ENCODE measurements at regions of chr14 and their contacts with region 1.

Region 1: DNA sequence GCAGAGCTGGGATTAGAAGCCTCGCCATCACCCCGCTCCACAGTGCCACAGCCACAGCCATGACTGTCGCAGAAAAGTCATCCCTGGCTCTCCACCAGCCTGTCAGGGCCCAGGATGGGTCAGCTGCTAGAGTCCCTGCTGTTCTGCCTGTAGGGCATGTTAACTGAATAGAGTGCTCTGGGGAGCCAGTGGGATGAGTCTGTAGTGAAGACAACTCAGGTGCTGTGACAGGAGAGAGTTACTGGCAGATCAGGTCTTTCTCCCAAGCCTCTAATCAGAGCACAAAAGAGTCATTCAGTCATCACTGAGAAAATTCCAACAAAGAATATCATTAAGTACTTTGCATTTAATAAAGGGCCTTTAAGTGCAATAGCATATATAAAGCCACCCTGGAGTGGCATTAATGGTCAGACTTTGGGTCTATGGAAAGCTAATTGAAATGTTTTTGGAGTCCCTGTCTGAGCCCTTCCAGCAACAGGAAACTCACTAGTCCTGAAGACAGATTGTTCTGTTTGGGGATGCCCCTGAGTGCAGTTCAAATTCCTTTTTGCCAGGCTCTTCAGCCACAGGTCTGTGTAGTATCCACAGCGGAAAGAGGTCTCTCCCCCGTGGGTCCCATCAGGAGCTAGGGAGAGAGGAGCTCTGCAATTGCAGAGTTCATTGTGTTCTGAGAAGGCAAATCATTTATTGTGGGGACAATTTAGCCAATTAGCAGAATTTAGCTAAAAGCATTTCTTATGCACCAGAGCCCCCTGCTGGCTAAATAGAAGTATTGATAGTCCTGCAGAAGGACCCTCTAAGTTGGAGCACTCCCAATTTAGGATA is 45.2 kb upstream of the C14orf132 start:
- DNase-seq: peak; percentile 47
- H3K4me3 ChIP-seq: peak overlapping the region in 1 of 2 experiments; percentile 36; a peak in 1 of 4 replicates
- H3K27ac ChIP-seq: no peak overlapping the region
- H3K4me1 ChIP-seq: no peaks in the 10 kb centered on the region
- H3K27me3 ChIP-seq: no peaks in the 10 kb centered on the region
- CTCF ChIP-seq: peak; percentile 93
- EP300 ChIP-seq: no peak
- RAD21 ChIP-seq: peak; percentile 95

Region 2: GRCh38 chr14:95561001-95561412 is 433.0 kb before region 1 on chr14:
- CTCF ChIA-PET with region 1: interaction called, 295 read pairs
- POLR2A ChIA-PET with region 1: no interaction called
- DNase-seq: peak; percentile 87
- H3K4me3 ChIP-seq: peak overlapping the region in 1 of 2 experiments; percentile 40; a peak in 1 of 4 replicates
- H3K27ac ChIP-seq: no peak overlapping the region
- H3K4me1 ChIP-seq: no peaks in the 10 kb centered on the region; a peak in 1 of 4 replicates
- H3K27me3 ChIP-seq: no peaks in the 10 kb centered on the region
- CTCF ChIP-seq: peak; percentile 98
- EP300 ChIP-seq: no peak
- RAD21 ChIP-seq: peak; percentile 97

Region 3: GRCh38 chr14:95609387-95609990 is 384.5 kb before region 1 on chr14:
- CTCF ChIA-PET with region 1: interaction called, 69 read pairs
- POLR2A ChIA-PET with region 1: no interaction called
- DNase-seq: peak; percentile 63
- H3K4me3 ChIP-seq: peak overlapping the region in 1 of 2 experiments; percentile 26; a peak in 1 of 4 replicates
- H3K27ac ChIP-seq: no peak overlapping the region
- H3K4me1 ChIP-seq: no peaks in the 10 kb centered on the region
- H3K27me3 ChIP-seq: no peaks in the 10 kb centered on the region; the same call in 1 of the 2 replicates
- CTCF ChIP-seq: peak; percentile 54
- EP300 ChIP-seq: no peak
- RAD21 ChIP-seq: peak; percentile 79

Region 4: GRCh38 chr14:95698287-95698686 is 295.7 kb before region 1 on chr14:
- CTCF ChIA-PET with region 1: no interaction called
- POLR2A ChIA-PET with region 1: no interaction called
- DNase-seq: no peak
- H3K4me3 ChIP-seq: no peak overlapping the region
- H3K27ac ChIP-seq: no peak overlapping the region
- H3K4me1 ChIP-seq: no peaks in the 10 kb centered on the region; a peak in 1 of 4 replicates
- H3K27me3 ChIP-seq: no peaks in the 10 kb centered on the region
- CTCF ChIP-seq: no peak
- EP300 ChIP-seq: no peak
- RAD21 ChIP-seq: no peak

Region 5: GRCh38 chr14:95979339-95980042 is 14.5 kb before region 1 on chr14:
- CTCF ChIA-PET with region 1: interaction called, 39 read pairs
- POLR2A ChIA-PET with region 1: no interaction called
- DNase-seq: peak; percentile 44
- H3K4me3 ChIP-seq: no peak overlapping the region
- H3K27ac ChIP-seq: no peak overlapping the region
- H3K4me1 ChIP-seq: no peaks in the 10 kb centered on the region
- H3K27me3 ChIP-seq: no peaks in the 10 kb centered on the region
- CTCF ChIP-seq: peak; percentile 39
- EP300 ChIP-seq: no peak
- RAD21 ChIP-seq: peak; percentile 54

Region 6: DNA sequence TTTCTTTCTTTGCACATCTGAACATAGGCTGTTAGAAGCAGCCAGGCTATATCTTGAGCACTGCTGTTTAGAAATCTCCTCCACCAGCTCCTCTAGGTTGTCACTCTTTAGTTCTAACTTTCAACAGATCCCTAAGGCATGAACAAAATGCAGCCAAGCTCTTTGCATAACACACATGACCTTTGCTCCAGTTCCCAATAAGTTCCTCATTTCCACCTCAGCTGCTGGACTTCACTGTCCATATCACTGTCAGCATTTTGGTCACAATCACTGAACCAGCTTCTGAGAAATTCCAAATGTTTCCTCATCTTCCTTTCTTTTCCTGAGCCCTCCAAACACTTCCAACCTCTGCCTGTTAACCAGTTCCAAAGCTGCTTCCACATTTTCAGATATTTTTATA is 17.6 kb after region 1 on chr14:
- CTCF ChIA-PET with region 1: interaction called, 13 read pairs
- POLR2A ChIA-PET with region 1: no interaction called
- DNase-seq: no peak
- H3K4me3 ChIP-seq: no peak overlapping the region
- H3K27ac ChIP-seq: no peak overlapping the region
- H3K4me1 ChIP-seq: no peaks in the 10 kb centered on the region
- H3K27me3 ChIP-seq: peaks cover 3% of the 10 kb centered on the region; the same call in 1 of the 2 replicates
- CTCF ChIP-seq: no peak
- EP300 ChIP-seq: no peak
- RAD21 ChIP-seq: no peak

Region 7: DNA sequence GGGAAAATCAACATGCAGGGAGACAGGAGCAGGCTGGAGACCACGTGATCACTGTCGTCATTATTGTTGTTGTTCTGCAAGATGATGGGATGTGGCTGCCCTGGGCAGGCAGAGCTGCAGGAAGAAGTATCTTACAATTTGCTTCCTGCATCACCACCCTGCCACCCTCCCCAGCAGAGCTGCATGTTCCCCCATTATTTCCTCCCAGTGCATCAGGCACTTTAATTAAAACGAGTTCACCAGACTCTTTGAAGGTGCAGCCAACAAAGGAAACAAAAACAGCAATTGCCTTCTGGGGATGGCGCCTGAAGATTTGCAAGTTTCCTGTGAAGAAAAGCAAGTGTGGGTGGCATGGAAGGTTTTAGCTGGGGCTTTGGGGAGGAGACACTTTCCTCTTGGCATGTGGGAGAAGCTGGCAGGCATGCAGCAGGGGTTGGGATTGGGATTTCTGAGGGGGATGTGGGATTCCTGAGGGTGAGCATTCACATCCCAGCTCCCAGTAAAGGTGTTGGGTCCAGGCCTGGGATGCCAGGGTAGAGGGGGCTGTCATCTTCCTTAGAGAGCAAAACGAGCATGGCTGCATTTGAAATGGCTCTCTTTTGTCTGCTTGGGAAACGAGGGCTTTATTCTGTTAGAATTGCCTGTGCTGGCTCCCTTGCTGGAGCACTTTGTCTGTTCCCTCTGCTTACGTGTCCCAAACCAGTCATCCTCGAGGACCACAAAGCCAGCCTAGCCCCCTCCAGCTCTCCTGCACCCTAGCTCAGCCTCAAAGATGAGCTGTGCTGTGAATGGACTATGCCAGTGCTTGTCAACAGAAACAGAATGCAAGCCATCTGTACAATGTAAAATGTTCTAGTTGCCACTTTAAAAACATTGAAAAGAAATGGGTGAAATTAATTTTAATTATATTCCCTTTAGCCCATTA is 33.7 kb after region 1 on chr14:
- CTCF ChIA-PET with region 1: interaction called, 10 read pairs
- POLR2A ChIA-PET with region 1: no interaction called
- DNase-seq: no peak
- H3K4me3 ChIP-seq: no peak overlapping the region
- H3K27ac ChIP-seq: no peak overlapping the region
- H3K4me1 ChIP-seq: peaks cover 0 to 8% of the 10 kb centered on the region in 2 experiments; a peak in 1 of 4 replicates
- H3K27me3 ChIP-seq: no peaks in the 10 kb centered on the region
- CTCF ChIP-seq: no peak
- EP300 ChIP-seq: no peak
- RAD21 ChIP-seq: no peak

Region 8: GRCh38 chr14:96189281-96189711 is 195.3 kb after region 1 on chr14:
- CTCF ChIA-PET with region 1: no interaction called
- POLR2A ChIA-PET with region 1: no interaction called
- DNase-seq: no peak
- H3K4me3 ChIP-seq: no peak overlapping the region
- H3K27ac ChIP-seq: no peak overlapping the region
- H3K4me1 ChIP-seq: peaks cover 0 to 6% of the 10 kb centered on the region in 2 experiments; a peak in 1 of 4 replicates
- H3K27me3 ChIP-seq: no peaks in the 10 kb centered on the region
- CTCF ChIP-seq: no peak
- EP300 ChIP-seq: no peak
- RAD21 ChIP-seq: no peak